Naive thymus-derived CD4-positive, alpha-beta T cell (primary cell): ENCODE measurements at regions of chr10 and their contacts with region 1.

Region 1: GRCh38 chr10:18583575-18584270 is 67.7 kb downstream of the NSUN6 start:
- DNase-seq: peak in 4 of 9 donors; percentile 2 to 13 (median 11)
- ATAC-seq: no peak
- H3K4me3 ChIP-seq: no peak overlapping the region
- H3K4me3 Mint-ChIP-seq: peak overlapping the region in 1 of 10 donors; percentile 4
- H3K27ac ChIP-seq: no peak overlapping the region
- H3K27ac Mint-ChIP-seq: peak overlapping the region in 6 of 9 donors; percentile 5 to 64 (median 38)
- H3K4me1 ChIP-seq: peaks cover 0 to 7% of the 10 kb centered on the region in 2 donors
- H3K4me1 Mint-ChIP-seq: peaks cover 7 to 29% (median 18%) of the 10 kb centered on the region in 7 donors
- H3K27me3 ChIP-seq: no peaks in the 10 kb centered on the region
- H3K27me3 Mint-ChIP-seq: no peaks in the 10 kb centered on the region

Region 2: GRCh38 chr10:17951868-17952371 is 631.8 kb before region 1 on chr10 and contains the start of gene SLC39A12:
- CTCF ChIA-PET with region 1: no interaction called
- POLR2A ChIA-PET with region 1: no interaction called
- intact Hi-C with region 1: no loop called
- DNase-seq: no peak
- ATAC-seq: no peak
- H3K4me3 ChIP-seq: no peak within 1 kb of the TSS
- H3K4me3 Mint-ChIP-seq: no peak within 1 kb of the TSS
- H3K27ac ChIP-seq: no peak within 1 kb of the TSS
- H3K27ac Mint-ChIP-seq: no peak within 1 kb of the TSS
- H3K4me1 ChIP-seq: no peaks in the 10 kb centered on the region
- H3K4me1 Mint-ChIP-seq: no peaks in the 10 kb centered on the region
- H3K27me3 ChIP-seq: no peaks in the 10 kb centered on the region
- H3K27me3 Mint-ChIP-seq: peaks cover 0 to 10% (median under 1%) of the 10 kb centered on the region in 5 donors
- total RNA-seq, gene SLC39A12: not detected

Region 3: DNA sequence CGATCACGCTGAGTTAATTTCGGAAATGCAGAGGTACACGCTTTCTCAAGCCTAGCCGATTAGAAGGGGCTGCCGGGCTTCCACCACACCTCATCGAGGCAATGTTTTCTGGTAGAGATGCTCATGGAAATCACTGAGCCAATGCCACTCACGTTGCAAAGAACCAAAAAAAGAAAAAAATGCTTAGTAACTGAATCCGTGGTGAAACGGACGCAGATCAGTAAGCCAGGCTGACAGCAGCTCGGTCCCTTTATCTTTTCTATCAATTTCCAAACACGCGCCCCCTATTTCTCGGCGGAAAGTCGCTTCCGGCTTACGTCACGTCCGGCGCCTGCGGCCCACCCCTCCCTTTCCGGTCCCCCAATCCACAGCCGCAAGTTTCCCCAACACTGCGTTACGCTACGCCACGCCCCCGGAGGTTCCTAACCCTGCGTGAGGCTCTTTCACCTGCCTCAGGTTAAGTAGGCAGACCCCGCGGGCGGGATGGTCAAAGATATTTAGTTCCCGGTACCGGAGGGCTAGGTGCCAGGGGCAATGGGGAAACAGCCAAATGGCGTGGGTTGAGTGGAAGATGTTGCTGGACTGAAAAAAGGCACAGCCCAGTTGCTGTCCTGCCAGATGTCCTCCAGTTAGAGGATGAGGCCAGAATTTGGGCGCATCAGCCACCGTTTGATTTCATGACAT is 67.7 kb after region 1 on chr10 and contains the start of gene NSUN6:
- CTCF ChIA-PET with region 1: no interaction called
- POLR2A ChIA-PET with region 1: no interaction called
- intact Hi-C with region 1: loop called in 1 of 2 experiments (anchors 2 kb)
- DNase-seq: peak; percentile 82 to 95 (median 95)
- ATAC-seq: peak; percentile 99
- H3K4me3 ChIP-seq: peak within 1 kb of the TSS; percentile 93
- H3K4me3 Mint-ChIP-seq: peak within 1 kb of the TSS; percentile 92 to 99 (median 96)
- H3K27ac ChIP-seq: peak within 1 kb of the TSS; percentile 91
- H3K27ac Mint-ChIP-seq: peak within 1 kb of the TSS; percentile 94 to 99 (median 98)
- H3K4me1 ChIP-seq: peaks cover 3 to 10% of the 10 kb centered on the region in 2 donors
- H3K4me1 Mint-ChIP-seq: peaks cover 10 to 53% (median 47%) of the 10 kb centered on the region in 7 donors
- H3K27me3 ChIP-seq: no peaks in the 10 kb centered on the region
- H3K27me3 Mint-ChIP-seq: peaks cover 0 to 2% (median 0%) of the 10 kb centered on the region in 5 donors
- total RNA-seq, gene NSUN6: 19.6 to 51.8 (median 41.3) TPM

Region 4: DNA sequence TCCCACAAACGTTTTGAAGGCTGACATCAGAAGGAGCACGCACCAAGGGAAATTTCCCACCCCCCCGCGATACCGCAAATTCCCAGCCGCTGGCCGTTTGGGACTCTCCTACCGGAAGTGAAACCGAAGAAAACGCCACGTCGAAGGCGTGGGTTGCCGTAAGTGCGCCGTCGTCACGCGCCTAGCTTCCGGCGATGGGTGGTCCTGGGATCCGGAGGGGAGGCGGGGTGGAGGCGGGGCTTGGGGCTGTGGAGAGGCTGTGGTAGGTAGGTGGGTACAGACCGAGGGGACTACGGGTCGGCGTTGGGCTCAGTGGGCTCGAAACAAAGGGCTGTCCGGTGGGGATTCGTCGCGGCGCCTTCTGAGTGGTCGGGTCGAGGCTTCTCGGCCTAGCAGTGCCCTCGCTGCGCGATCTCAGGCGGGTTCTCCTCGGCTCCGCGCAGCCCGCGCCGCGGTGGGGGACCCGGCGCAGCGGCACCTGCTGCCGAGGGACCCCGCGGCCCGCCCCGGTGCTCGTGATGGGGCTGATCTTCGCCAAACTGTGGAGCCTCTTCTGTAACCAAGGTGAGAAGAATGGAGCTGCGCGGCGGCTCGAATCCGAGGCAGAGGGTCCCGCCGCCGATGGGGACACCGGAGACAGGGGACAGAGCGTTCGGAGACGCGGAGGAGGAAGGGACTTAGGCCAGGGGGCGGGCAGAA is 75.5 kb after region 1 on chr10 and contains the start of gene ARL5B:
- CTCF ChIA-PET with region 1: no interaction called
- POLR2A ChIA-PET with region 1: no interaction called
- intact Hi-C with region 1: loop called (anchors 1 to 2 kb)
- DNase-seq: peak; percentile 82 to 97 (median 93)
- ATAC-seq: peak; percentile 98
- H3K4me3 ChIP-seq: peak within 1 kb of the TSS; percentile 89
- H3K4me3 Mint-ChIP-seq: peak within 1 kb of the TSS; percentile 94 to 100 (median 99)
- H3K27ac ChIP-seq: peak within 1 kb of the TSS; percentile 92
- H3K27ac Mint-ChIP-seq: peak within 1 kb of the TSS; percentile 95 to 99 (median 99)
- H3K4me1 ChIP-seq: peaks cover 16 to 21% of the 10 kb centered on the region in 2 donors
- H3K4me1 Mint-ChIP-seq: peaks cover 28 to 56% (median 44%) of the 10 kb centered on the region in 7 donors
- H3K27me3 ChIP-seq: no peaks in the 10 kb centered on the region
- H3K27me3 Mint-ChIP-seq: no peaks in the 10 kb centered on the region
- total RNA-seq, gene ARL5B: 9.7 to 15.8 (median 13.9) TPM